Left cardiac atrium (tissue), 4 donors: ENCODE measurements at regions of chr10 and their contacts with region 1.

Region 1: GRCh38 chr10:70880077-70880534 is 8.3 kb downstream of the PCBD1 start:
- DNase-seq: peak; percentile 78
- ATAC-seq: peak; percentile 79 to 82

Region 2: GRCh38 chr10:70815504-70816219 is 64.4 kb before region 1 on chr10 and contains the start of gene SGPL1:
- intact Hi-C with region 1: loop called (anchors 1 to 2 kb)
- DNase-seq: peak; percentile 89
- ATAC-seq: peak; percentile 96 to 97
- total RNA-seq, gene SGPL1: 18.5 to 19.3 TPM

Region 3: GRCh38 chr10:70843776-70844489 is 36.2 kb before region 1 on chr10:
- intact Hi-C with region 1: no loop called
- DNase-seq: no peak
- ATAC-seq: no peak

Region 4: GRCh38 chr10:71025535-71025934 is 145.4 kb after region 1 on chr10:
- intact Hi-C with region 1: no loop called
- DNase-seq: no peak
- ATAC-seq: no peak

Region 5: GRCh38 chr10:71099731-71100361 is 219.7 kb after region 1 on chr10:
- intact Hi-C with region 1: no loop called
- DNase-seq: no peak
- ATAC-seq: no peak

Region 6: DNA sequence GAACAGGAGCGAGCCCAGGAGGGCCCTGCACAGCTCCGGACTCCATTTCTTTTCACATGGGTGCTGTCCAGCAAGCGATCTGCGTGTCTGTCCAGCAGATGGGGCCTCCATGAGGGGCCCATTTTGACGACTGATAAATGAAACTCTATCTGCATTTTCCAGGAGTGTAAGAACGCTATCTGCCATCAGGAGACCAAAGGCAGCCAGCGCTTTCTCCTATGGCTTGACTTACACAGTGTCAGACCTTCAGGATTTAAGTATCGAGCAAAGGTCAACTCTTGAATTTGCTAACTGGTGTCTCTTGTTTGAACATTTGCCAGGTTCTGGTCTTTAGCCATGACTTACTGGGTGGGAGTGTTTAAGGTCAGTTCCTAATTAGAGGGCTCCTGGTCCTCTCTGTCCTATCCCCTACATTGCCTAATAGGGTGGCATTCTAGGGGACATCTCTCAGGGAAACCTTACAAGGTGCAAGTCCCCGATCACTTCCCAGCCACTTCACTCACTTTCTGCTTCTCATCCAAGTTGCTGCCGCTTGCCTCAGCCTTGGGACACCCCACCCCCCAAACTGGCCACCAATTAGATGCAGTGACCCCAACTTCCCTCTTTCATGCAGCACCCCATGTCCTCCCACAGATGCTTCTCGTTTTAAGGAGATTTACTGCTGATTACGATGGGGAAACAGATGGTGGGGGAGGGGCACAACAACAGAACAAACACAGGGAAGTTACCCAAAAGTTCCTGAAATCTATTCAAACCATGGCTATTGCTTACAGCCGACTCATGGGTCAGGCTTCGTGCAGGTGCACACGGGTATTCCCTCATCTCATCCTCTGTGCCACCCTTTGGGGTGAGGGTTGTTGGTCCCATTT is 873.2 kb after region 1 on chr10:
- intact Hi-C with region 1: no loop called
- DNase-seq: peak; percentile 61
- ATAC-seq: peak in 1 of 2 donors; percentile 13